ENCODE measurements at regions of chr18 and their contacts with region 1.

Region 1: DNA sequence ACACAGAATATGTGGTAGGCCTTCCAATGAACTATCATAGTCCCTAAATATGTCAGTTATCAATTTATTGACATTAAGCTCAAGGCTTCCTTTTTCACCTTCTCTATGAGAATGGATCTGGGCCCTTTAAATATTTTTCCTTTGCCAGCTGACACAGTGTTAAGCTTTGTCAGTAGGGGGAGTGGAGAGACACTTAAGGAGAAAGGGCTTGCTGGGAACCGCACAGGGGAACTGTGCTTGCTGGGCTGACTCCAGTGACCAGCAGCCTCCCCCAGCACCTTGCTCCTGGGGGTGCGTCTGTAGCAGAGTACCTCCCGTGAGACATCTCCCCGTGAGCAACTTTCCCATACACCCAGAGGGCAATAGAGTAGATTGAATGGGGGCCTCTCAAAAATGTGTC is 6.5 kb upstream of the PTPN2 start:
- DNase-seq: peak; percentile 22
- ATAC-seq: peak; percentile 25; the same call in 1 of the 2 replicates
- H3K4me3 ChIP-seq: no peak overlapping the region
- H3K27ac ChIP-seq: no peak overlapping the region
- H3K4me1 ChIP-seq: peaks cover 10% of the 10 kb centered on the region
- H3K27me3 ChIP-seq: no peaks in the 10 kb centered on the region
- CTCF ChIP-seq: no peak

Region 2: DNA sequence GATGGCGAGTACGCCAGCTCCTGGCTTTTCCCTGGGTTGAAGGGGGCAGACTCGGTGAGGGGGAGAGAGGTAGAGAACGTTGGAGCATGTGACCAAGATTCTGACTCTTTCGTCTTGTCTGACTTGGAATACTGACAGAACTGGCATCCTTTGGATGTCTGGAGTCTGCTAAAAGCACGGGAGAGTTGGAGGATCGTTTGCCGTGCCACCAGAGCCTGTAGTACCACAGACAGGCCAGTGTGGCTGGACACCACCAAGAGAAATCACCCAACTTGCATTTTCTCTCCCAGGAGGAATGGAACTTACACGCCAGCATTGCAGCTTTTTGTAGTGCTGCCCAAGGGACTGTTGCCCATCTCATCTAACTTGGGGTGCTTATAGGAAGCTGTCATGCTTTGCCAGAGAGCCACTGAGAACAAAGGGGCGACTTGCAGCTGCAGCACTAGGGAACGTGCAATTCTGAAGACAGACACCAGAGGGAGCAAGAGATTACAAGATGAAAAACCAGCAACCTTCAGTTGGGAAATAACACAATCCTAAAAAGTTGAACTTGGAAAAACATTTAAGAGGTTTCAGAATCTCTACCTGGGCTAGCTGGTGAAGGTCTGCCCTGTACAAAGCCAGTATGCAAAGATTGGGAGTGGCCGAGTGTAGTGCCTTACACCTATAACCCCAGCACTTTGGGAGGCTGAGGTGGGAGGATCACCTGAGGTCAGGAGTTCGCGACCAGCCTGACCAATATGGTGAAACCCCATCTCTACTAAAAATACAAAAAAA is 163.5 kb before region 1 on chr18:
- CTCF ChIA-PET with region 1: no interaction called
- POLR2A ChIA-PET with region 1: no interaction called
- intact Hi-C with region 1: loop called (anchors 1 kb)
- DNase-seq: peak; percentile 92
- ATAC-seq: peak; percentile 74
- H3K4me3 ChIP-seq: no peak overlapping the region
- H3K27ac ChIP-seq: no peak overlapping the region
- H3K4me1 ChIP-seq: no peaks in the 10 kb centered on the region
- H3K27me3 ChIP-seq: no peaks in the 10 kb centered on the region
- CTCF ChIP-seq: peak; percentile 94

Region 3: DNA sequence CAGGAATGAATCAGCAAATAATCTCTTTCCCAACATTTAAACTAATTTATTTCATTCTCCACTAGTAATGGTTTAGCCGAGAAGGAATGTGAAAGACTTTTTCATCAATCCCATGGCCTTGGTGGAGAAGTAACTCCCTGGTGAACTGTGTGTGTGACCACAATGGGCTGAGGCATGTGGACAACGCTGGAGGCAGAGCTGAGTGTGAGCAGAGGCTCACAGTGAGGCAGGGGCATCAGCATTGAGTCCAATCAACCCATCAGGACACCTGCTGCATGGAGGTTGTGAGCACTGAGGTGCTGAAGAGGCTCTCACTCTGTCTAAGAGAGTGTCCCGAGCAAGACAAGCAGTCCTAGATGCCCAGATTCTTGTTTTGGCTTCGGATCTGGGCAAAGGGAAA is 1163.2 kb after region 1 on chr18:
- CTCF ChIA-PET with region 1: no interaction called
- POLR2A ChIA-PET with region 1: no interaction called
- intact Hi-C with region 1: no loop called
- DNase-seq: no peak
- ATAC-seq: no peak
- H3K4me3 ChIP-seq: no peak overlapping the region
- H3K27ac ChIP-seq: no peak overlapping the region
- H3K4me1 ChIP-seq: no peaks in the 10 kb centered on the region
- H3K27me3 ChIP-seq: peaks cover 35% of the 10 kb centered on the region
- CTCF ChIP-seq: no peak